GM12878 (cell line): ENCODE measurements at regions of chr2 and their contacts with region 1.

Region 1: DNA sequence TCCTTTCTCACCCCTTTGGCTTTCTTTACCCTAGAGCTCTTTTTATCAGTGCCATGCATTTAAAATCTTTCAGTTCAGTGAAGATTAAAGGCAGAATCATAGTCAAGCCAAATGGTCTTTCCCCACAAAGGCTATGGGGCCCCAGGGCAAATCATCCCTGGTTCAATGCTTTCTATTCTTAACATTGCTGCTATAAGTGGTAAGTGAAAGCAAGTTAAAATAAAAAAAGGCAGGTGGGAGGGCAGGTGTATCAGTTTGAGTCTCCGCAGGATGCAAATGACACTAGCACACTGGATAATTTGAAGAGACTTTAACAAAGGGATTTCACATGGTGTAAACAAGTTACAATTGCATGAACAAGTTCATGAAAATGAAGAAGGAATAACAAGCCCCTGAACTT is 757.4 kb downstream of the SATB2 start:
- DNase-seq: no peak
- ATAC-seq: peak; percentile 48
- H3K4me3 ChIP-seq: no peak overlapping the region
- H3K27ac ChIP-seq: no peak overlapping the region
- H3K4me1 ChIP-seq: no peaks in the 10 kb centered on the region
- H3K27me3 ChIP-seq: no peaks in the 10 kb centered on the region
- CTCF ChIP-seq: no peak
- EP300 ChIP-seq: 0 out of 4 replicates have a peak, but pooled peaks of 1 of the 2 experiments have one; percentile 25
- POLR2A ChIP-seq: no peak
- RAD21 ChIP-seq: no peak

Region 2: DNA sequence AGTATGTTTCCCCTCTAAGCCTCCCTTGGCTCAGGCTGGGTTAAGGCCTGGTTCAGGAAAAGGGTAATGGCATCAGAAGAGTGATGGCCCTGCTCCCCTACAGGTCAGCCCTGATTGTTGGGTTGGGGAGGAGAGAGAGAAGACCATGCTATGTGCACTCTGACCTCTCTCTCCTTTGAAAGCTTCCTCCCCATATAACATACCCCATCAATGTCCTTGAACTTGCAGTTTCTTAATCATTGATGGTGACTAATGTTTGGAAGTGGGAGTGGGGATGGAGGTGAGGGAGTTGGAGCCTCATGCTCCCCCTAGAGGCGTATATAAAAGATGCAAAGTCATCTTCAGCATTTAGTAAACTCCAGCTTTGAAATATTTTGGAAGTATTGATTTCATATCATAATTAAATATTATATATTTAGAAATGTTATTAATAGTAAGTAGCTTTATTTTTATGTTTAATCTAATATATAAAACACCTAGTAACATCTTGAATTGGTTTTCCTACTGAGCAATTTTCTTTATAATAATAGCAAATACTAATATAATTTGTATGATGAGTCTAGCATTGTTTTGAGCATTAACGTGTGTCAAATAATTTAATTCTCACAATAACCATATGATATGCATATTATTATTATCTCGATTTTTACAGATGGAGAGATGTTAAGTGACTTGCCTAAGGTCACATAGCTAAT is 887.1 kb before region 1 on chr2:
- CTCF ChIA-PET with region 1: no interaction called
- POLR2A ChIA-PET with region 1: no interaction called
- RAD21 ChIA-PET with region 1: no interaction called
- SMC1A ChIA-PET with region 1: no interaction called
- in situ Hi-C with region 1: no loop called
- intact Hi-C with region 1: no loop called
- DNase-seq: no peak
- ATAC-seq: peak; percentile 64
- H3K4me3 ChIP-seq: no peak overlapping the region
- H3K27ac ChIP-seq: no peak overlapping the region
- H3K4me1 ChIP-seq: no peaks in the 10 kb centered on the region
- H3K27me3 ChIP-seq: peaks cover 0 to 3% of the 10 kb centered on the region in 2 experiments; a peak in 1 of 4 replicates
- CTCF ChIP-seq: peak; percentile 43 to 61 (median 56)
- EP300 ChIP-seq: no peak
- POLR2A ChIP-seq: no peak
- RAD21 ChIP-seq: no peak

Region 3: GRCh38 chr2:198408171-198408570 is 292.1 kb before region 1 on chr2:
- CTCF ChIA-PET with region 1: no interaction called
- POLR2A ChIA-PET with region 1: no interaction called
- RAD21 ChIA-PET with region 1: no interaction called
- SMC1A ChIA-PET with region 1: no interaction called
- in situ Hi-C with region 1: no loop called
- intact Hi-C with region 1: no loop called
- DNase-seq: no peak
- ATAC-seq: no peak
- H3K4me3 ChIP-seq: no peak overlapping the region
- H3K27ac ChIP-seq: no peak overlapping the region
- H3K4me1 ChIP-seq: no peaks in the 10 kb centered on the region
- H3K27me3 ChIP-seq: no peaks in the 10 kb centered on the region; a peak in 1 of 4 replicates
- CTCF ChIP-seq: no peak
- EP300 ChIP-seq: no peak
- POLR2A ChIP-seq: no peak
- RAD21 ChIP-seq: no peak

Region 4: DNA sequence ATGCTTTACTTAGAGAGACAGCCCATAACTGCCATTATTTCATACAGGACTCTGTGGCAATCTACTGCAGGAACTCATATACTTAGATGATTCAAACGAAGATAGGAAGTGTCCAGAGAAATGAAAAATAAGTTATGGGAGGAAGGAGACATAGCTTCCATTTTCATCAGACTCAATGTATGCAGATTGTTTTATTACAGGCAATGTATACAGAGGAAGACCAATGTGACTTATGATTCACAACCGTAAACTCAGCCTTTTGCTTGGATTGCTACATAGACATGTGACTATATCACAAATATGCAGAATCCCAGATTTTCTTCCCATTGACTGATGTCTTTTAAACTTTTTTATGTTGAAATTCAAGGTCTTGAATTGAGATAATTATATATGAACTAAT is 36.0 kb before region 1 on chr2:
- CTCF ChIA-PET with region 1: interaction called, 22 read pairs
- POLR2A ChIA-PET with region 1: interaction called, 6 read pairs
- RAD21 ChIA-PET with region 1: interaction called, 51 read pairs
- SMC1A ChIA-PET with region 1: interaction called, 69 read pairs
- in situ Hi-C with region 1: no loop called
- intact Hi-C with region 1: no loop called
- DNase-seq: no peak
- ATAC-seq: no peak
- H3K4me3 ChIP-seq: no peak overlapping the region
- H3K27ac ChIP-seq: no peak overlapping the region
- H3K4me1 ChIP-seq: no peaks in the 10 kb centered on the region
- H3K27me3 ChIP-seq: no peaks in the 10 kb centered on the region
- CTCF ChIP-seq: no peak
- EP300 ChIP-seq: no peak
- POLR2A ChIP-seq: no peak
- RAD21 ChIP-seq: no peak

Region 5: GRCh38 chr2:198715302-198715835 is 15.1 kb after region 1 on chr2:
- CTCF ChIA-PET with region 1: interaction called, 5 read pairs
- POLR2A ChIA-PET with region 1: interaction called, 8 read pairs
- RAD21 ChIA-PET with region 1: interaction called, 15 read pairs
- SMC1A ChIA-PET with region 1: interaction called, 14 read pairs
- in situ Hi-C with region 1: no loop called
- intact Hi-C with region 1: no loop called
- DNase-seq: no peak
- ATAC-seq: peak; percentile 25
- H3K4me3 ChIP-seq: no peak overlapping the region
- H3K27ac ChIP-seq: no peak overlapping the region
- H3K4me1 ChIP-seq: no peaks in the 10 kb centered on the region
- H3K27me3 ChIP-seq: no peaks in the 10 kb centered on the region
- CTCF ChIP-seq: no peak
- EP300 ChIP-seq: no peak
- POLR2A ChIP-seq: no peak
- RAD21 ChIP-seq: no peak

Region 6: DNA sequence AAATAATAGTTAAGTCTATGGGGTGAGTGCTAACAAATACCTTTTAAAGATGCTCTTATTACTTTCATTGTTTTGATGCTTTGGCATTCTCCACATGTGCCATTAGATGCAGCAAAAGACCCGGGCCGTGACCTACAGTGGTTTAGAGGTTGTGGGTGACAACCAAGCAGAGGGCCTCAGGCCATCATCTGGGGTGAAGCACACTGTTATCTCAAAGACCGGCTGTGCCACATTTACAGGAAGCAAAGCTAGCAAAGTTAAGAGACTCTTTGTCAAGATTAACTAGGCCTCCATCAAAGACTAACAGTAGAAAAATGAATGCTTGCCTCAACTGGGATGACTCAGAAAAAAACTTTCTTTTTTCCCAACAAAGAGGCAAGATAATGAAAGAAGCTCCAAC is 62.1 kb after region 1 on chr2:
- CTCF ChIA-PET with region 1: interaction called, 3 read pairs
- POLR2A ChIA-PET with region 1: interaction called, 5 read pairs
- RAD21 ChIA-PET with region 1: interaction called, 10 read pairs
- SMC1A ChIA-PET with region 1: interaction called, 23 read pairs
- in situ Hi-C with region 1: no loop called
- intact Hi-C with region 1: no loop called
- DNase-seq: no peak
- ATAC-seq: peak; percentile 45
- H3K4me3 ChIP-seq: no peak overlapping the region
- H3K27ac ChIP-seq: no peak overlapping the region
- H3K4me1 ChIP-seq: no peaks in the 10 kb centered on the region
- H3K27me3 ChIP-seq: no peaks in the 10 kb centered on the region
- CTCF ChIP-seq: no peak
- EP300 ChIP-seq: no peak
- POLR2A ChIP-seq: no peak
- RAD21 ChIP-seq: no peak